ENCODE measurements at regions of chr22 and their contacts with region 1.

Region 1: GRCh38 chr22:45948081-45948648 is 28.8 kb downstream of the WNT7B start:
- DNase-seq: no peak
- ATAC-seq: no peak
- H3K4me3 ChIP-seq: no peak overlapping the region
- H3K27ac ChIP-seq: no peak overlapping the region
- H3K4me1 ChIP-seq: 0 out of 2 replicates have a peak, but pooled peaks cover under 1% of the 10 kb centered on the region
- H3K27me3 ChIP-seq: peaks cover 10% of the 10 kb centered on the region; the same call in 1 of the 2 replicates
- CTCF ChIP-seq: no peak
- POLR2A ChIP-seq: no peak
- RAD21 ChIP-seq: no peak

Region 2: DNA sequence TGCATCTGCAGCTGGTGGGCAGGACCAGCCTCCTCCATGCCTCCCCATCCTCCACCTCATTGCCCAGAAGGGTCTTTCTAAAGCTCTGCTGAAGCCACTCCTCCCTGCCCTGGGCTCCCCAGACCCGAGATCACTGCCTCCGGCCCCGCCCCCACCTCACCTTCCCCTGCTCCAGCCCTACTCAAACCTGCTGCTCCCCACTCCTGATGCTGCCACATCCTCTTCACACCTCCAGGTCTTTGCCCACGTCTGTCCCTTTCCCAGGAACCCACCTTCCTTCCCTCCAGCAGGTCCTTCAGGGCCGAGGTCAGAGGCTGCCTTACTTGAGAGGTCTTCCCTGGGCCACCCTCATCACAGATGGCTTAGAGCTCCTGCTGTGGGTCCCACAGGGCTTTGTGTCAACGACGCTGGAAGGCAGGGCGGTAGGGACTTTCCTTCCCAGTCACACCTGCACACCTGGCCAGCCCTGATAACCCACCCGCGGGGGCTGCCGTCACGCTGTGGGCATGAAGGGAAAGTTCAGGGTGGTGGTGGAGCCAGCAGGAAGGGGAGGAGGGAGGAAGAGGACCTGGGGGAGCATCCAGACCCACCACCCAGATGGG is 16.9 kb after region 1 on chr22:
- CTCF ChIA-PET with region 1: no interaction called
- POLR2A ChIA-PET with region 1: interaction called, 18 read pairs
- dilution Hi-C with region 1: no loop called
- in situ Hi-C with region 1: no loop called
- intact Hi-C with region 1: no loop called
- DNase-seq: no peak
- ATAC-seq: no peak
- H3K4me3 ChIP-seq: no peak overlapping the region
- H3K27ac ChIP-seq: no peak overlapping the region
- H3K4me1 ChIP-seq: peaks cover 17% of the 10 kb centered on the region
- H3K27me3 ChIP-seq: peaks cover 8% of the 10 kb centered on the region; the same call in 1 of the 2 replicates
- CTCF ChIP-seq: no peak
- POLR2A ChIP-seq: no peak
- RAD21 ChIP-seq: no peak

Region 3: DNA sequence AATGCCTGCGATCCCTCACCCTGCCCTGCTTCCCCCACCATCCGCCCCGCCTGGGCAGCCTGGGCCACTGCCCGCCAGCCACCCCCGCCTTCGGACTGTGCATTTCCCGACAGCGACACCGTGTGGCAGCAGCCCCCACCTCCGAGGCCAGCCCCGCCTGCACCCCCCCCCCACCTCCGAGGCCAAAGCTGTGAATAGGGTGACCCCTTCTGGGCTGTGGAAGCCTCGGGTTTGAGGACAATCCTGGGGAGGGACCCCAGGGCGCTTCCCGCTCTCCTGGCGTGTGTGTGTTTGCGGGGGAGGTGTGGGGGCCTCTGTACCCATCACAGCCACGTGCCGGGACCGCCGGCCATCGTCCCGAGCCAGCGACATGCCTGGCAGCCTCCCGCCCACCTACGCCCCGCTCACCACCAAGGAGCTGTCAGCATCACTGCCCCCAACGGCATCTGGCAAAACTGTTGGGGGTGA is 168.4 kb after region 1 on chr22:
- CTCF ChIA-PET with region 1: no interaction called
- POLR2A ChIA-PET with region 1: no interaction called
- dilution Hi-C with region 1: no loop called
- in situ Hi-C with region 1: no loop called
- intact Hi-C with region 1: no loop called
- DNase-seq: peak; percentile 73
- ATAC-seq: peak; percentile 81
- H3K4me3 ChIP-seq: no peak overlapping the region
- H3K27ac ChIP-seq: no peak overlapping the region; the same call in 1 of the 2 replicates
- H3K4me1 ChIP-seq: peaks cover 15% of the 10 kb centered on the region
- H3K27me3 ChIP-seq: no peaks in the 10 kb centered on the region
- CTCF ChIP-seq: peak; percentile 98
- POLR2A ChIP-seq: no peak
- RAD21 ChIP-seq: peak; percentile 87

Measured in IMR-90 (cell line).